WTC11 (cell line): ENCODE measurements at regions of chr2 and their contacts with region 1.

Region 1: GRCh38 chr2:9370746-9371145 is 52.6 kb downstream of the ITGB1BP1 start:
- DNase-seq: no peak
- ATAC-seq: no peak
- H3K4me3 Mint-ChIP-seq: no peak overlapping the region
- H3K27ac Mint-ChIP-seq: no peak overlapping the region
- H3K4me1 Mint-ChIP-seq: peaks cover 4% of the 10 kb centered on the region; the same call in 1 of the 2 replicates
- H3K27me3 Mint-ChIP-seq: no peaks in the 10 kb centered on the region
- CTCF ChIP-seq: no peak

Region 2: GRCh38 chr2:9135780-9136558 is 234.8 kb before region 1 on chr2:
- CTCF ChIA-PET with region 1: interaction called, 13 read pairs
- POLR2A ChIA-PET with region 1: no interaction called
- DNase-seq: no peak
- ATAC-seq: no peak
- H3K4me3 Mint-ChIP-seq: no peak overlapping the region
- H3K27ac Mint-ChIP-seq: no peak overlapping the region
- H3K4me1 Mint-ChIP-seq: peaks cover 16% of the 10 kb centered on the region
- H3K27me3 Mint-ChIP-seq: peaks cover 19% of the 10 kb centered on the region
- CTCF ChIP-seq: no peak

Region 3: DNA sequence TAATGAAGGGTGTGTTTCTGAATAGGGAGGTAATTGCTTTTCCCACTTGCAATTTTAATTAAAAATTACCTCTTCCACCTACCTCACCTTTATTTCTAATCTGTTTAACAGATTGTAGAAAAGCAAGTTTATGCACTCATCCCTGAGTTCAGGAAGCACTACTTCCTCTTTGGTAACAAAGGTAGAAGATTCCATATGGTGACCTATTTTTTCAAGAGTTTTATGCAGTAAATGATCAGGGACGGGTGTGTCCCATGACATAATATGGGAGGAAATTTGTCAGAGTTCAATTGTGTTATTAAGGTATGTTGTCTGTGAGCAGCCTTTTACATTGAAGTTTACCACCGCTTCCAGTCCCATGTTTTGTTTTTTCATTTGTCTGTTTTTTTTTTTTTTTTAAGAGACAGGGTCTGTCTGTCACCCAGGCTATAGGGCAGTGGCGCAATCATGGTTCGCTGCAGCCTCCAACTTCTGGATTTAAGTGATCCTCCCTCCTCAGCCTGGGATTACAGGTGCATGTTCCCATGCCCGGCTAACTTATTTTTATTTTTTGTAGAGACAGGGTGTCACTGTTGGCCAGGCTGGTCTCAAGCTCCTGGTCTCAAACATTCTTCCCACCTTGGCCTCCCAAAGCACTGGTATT is 95.9 kb before region 1 on chr2:
- CTCF ChIA-PET with region 1: interaction called, 12 read pairs
- POLR2A ChIA-PET with region 1: no interaction called
- DNase-seq: no peak
- ATAC-seq: no peak
- H3K4me3 Mint-ChIP-seq: no peak overlapping the region
- H3K27ac Mint-ChIP-seq: peak overlapping the region; percentile 51
- H3K4me1 Mint-ChIP-seq: peaks cover 34% of the 10 kb centered on the region
- H3K27me3 Mint-ChIP-seq: no peaks in the 10 kb centered on the region
- CTCF ChIP-seq: no peak